H1 (cell line): ENCODE measurements at regions of chr11 and their contacts with region 1.

Region 1: GRCh38 chr11:131465746-131466145 is 95.3 kb downstream of the NTM start:
- DNase-seq: peak; percentile 38 to 74
- H3K4me3 ChIP-seq: no peak overlapping the region
- H3K27ac ChIP-seq: no peak overlapping the region
- H3K4me1 ChIP-seq: peaks cover 2 to 3% (median 2%) of the 10 kb centered on the region in 4 experiments; a peak in 4 of 7 replicates
- H3K27me3 ChIP-seq: no peaks in the 10 kb centered on the region
- CTCF ChIP-seq: peak; percentile 75 to 99 (median 84)
- EP300 ChIP-seq: no peak
- POLR2A ChIP-seq: no peak
- RAD21 ChIP-seq: peak; percentile 58 to 73

Region 2: DNA sequence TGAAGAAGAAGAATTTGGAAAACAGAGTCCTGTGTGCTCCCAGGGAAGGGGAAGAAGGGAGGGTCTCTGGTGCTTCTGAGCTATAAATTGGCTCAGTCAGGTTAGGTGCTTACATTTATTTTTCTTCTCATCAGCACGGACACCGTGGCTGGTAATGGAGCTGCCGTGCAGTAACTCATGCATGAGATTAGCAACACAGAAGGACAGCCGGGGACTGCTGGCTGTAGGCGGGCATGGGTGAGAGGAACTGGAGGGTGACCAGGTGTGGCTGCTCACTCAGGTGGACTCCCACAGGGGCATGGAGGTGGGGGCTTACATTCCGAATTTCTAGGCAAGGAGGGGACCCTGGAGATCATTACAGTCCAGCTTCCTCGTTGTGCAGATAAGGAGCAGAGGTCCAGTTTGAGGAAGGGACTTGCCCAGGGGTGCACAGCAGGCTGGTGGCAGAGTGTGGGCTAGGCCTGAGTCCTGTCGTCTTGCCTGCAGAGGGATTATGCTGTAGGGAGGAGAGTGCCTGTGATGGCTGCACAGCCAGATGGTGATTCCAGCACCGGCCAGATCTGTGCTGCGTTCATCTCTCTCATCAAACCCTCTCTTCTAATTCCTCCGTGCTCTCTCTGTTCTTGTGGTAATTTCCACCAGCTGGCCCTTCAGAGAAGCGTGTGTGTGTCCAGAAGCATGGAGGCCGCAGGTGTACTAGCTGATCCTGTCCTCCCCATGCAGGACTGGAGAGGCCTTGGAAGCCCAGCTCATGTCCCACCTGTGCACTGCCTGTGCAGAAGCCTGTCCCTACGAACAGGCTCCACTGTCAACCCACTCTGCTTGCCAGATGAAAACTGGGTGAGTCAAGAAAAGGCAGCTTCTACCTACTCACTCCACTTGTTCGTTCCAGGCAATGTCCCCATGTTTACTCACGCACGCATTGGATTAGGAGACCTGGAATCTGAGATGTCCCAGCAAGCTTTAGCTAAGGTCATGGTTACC is 16.4 kb before region 1 on chr11:
- CTCF ChIA-PET with region 1: interaction called, 149 read pairs
- POLR2A ChIA-PET with region 1: no interaction called
- DNase-seq: no peak
- H3K4me3 ChIP-seq: no peak overlapping the region
- H3K27ac ChIP-seq: no peak overlapping the region
- H3K4me1 ChIP-seq: peaks cover 0 to 6% (median 0%) of the 10 kb centered on the region in 4 experiments; a peak in 1 of 7 replicates
- H3K27me3 ChIP-seq: no peaks in the 10 kb centered on the region
- CTCF ChIP-seq: no peak
- EP300 ChIP-seq: no peak
- POLR2A ChIP-seq: no peak
- RAD21 ChIP-seq: no peak

Region 3: GRCh38 chr11:131481303-131481702 is 15.6 kb after region 1 on chr11:
- CTCF ChIA-PET with region 1: interaction called, 47 read pairs
- POLR2A ChIA-PET with region 1: interaction called, 3 read pairs
- DNase-seq: no peak
- H3K4me3 ChIP-seq: no peak overlapping the region
- H3K27ac ChIP-seq: no peak overlapping the region
- H3K4me1 ChIP-seq: peaks cover 0 to 3% (median 1%) of the 10 kb centered on the region in 4 experiments; a peak in 4 of 7 replicates
- H3K27me3 ChIP-seq: no peaks in the 10 kb centered on the region
- CTCF ChIP-seq: no peak
- EP300 ChIP-seq: no peak
- POLR2A ChIP-seq: no peak
- RAD21 ChIP-seq: no peak

Region 4: DNA sequence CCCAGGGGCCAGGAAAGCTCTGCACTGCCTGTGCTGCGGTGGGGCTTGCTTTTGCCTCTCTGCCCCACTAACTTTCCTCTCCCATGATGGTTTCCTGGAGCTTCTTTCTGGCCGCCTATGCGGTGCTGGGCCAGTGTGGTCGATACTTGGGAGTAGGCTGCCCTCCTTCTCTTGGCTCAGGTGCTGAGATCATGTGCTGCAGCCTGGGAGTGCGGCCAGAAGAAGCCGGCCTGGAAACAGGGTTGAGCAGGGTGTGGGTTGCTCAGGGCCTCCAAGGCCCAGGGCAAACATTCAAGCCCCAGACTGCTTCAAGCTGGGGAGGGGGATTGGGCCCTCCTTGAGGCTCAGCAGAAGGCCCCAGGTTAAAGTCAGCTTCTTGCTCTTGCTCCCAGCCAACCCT is 29.7 kb after region 1 on chr11:
- CTCF ChIA-PET with region 1: interaction called, 13 read pairs
- POLR2A ChIA-PET with region 1: no interaction called
- DNase-seq: no peak
- H3K4me3 ChIP-seq: no peak overlapping the region
- H3K27ac ChIP-seq: no peak overlapping the region
- H3K4me1 ChIP-seq: peaks cover 0 to 10% (median 0%) of the 10 kb centered on the region in 4 experiments; a peak in 3 of 7 replicates
- H3K27me3 ChIP-seq: no peaks in the 10 kb centered on the region
- CTCF ChIP-seq: no peak
- EP300 ChIP-seq: no peak
- POLR2A ChIP-seq: no peak
- RAD21 ChIP-seq: no peak

Region 5: GRCh38 chr11:131504199-131504949 is 38.6 kb after region 1 on chr11:
- CTCF ChIA-PET with region 1: interaction called, 58 read pairs
- POLR2A ChIA-PET with region 1: no interaction called
- DNase-seq: peak; percentile 46 to 84
- H3K4me3 ChIP-seq: no peak overlapping the region
- H3K27ac ChIP-seq: no peak overlapping the region
- H3K4me1 ChIP-seq: peaks cover 0 to 6% (median 4%) of the 10 kb centered on the region in 4 experiments; a peak in 4 of 7 replicates
- H3K27me3 ChIP-seq: no peaks in the 10 kb centered on the region; a peak in 1 of 7 replicates
- CTCF ChIP-seq: peak; percentile 73 to 86 (median 84)
- EP300 ChIP-seq: peak in 1 of 2 experiments; percentile 70; a peak in 1 of 3 replicates
- POLR2A ChIP-seq: no peak
- RAD21 ChIP-seq: peak; percentile 89 to 92

Region 6: DNA sequence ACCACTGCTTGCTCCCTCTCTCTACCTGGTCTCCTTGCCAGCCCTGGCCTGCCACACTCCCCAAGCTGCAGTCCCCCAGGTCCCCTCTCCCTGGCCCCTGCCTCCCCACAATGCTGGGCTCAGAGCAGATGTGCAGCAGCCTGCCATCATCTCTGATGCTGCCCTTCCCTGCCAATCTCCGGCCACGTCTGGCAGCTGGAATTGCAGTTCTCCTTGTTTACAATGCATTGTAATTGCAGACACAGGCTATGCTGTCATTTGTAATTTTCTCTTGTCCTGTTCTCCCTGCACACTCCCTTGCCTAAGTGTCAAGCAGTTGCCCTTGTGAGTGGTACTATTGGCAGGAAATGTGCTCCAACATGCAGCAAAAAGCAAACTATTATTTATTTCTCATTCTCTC is 127.0 kb after region 1 on chr11:
- CTCF ChIA-PET with region 1: no interaction called
- POLR2A ChIA-PET with region 1: no interaction called
- DNase-seq: no peak
- H3K4me3 ChIP-seq: no peak overlapping the region
- H3K27ac ChIP-seq: no peak overlapping the region
- H3K4me1 ChIP-seq: peaks cover 8 to 21% (median 15%) of the 10 kb centered on the region in 4 experiments
- H3K27me3 ChIP-seq: no peaks in the 10 kb centered on the region; a peak in 2 of 7 replicates
- CTCF ChIP-seq: no peak
- EP300 ChIP-seq: no peak
- POLR2A ChIP-seq: no peak
- RAD21 ChIP-seq: no peak